Calu3 (cell line): ENCODE measurements at regions of chrX and their contacts with region 1.

Region 1: DNA sequence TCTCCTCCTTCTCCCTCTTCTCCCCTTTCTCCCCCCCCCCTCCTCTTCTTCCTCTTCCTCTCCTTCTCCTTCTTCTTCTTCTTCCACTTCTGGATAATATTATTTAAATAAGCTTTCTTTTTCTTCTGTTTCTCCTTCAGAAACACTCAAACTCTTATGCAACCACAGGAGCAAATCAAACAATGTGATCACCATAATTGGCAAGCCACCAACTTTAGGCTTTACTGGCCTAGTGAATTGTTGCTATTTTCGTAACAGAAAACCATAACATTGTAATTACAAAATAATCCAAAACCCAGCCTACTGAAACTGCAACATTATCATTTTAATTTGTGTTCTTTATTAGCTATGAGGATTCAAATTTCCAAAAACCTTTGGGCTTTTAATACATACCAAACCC is 14.3 kb downstream of the DCAF8L1 start:
- DNase-seq: peak; percentile 24
- H3K4me3 Mint-ChIP-seq: no peak overlapping the region
- H3K27ac Mint-ChIP-seq: peak overlapping the region; percentile 99
- H3K4me1 Mint-ChIP-seq: peaks cover 37% of the 10 kb centered on the region
- H3K27me3 Mint-ChIP-seq: no peaks in the 10 kb centered on the region
- CTCF ChIP-seq: no peak

Region 2: DNA sequence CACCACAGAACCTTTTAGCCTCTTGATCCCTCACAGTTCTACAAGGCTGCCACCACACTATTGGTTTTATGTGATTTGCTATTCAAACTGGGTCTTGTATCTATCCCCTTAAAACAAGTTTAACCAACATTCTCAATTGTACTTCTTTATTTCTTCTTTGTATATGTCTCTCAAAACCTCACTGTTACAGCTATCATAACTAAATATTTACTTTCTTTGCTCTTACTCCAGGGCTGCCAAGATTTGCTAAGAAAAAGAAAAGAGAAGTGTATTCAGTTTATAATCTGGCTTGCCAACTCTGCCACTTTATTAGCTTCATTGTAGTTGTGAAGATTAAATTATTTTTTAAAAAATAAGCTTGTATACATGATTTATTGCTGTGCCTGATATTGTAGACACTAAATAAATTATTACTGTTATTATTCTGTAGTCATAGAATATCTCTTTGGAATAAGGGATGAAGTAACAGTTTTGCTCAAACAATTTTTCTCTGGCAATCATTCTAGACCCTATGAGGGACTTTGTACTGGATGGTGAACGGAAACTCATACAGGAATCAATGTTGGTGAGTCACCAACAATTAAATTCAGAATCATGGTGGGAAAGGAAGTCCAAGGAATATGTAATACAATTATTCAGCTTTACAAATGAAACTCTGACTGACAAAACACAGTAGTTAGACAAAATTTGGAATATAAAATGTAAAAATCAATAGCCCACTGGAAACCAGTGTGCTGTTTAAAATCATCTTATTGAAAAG is 141.4 kb after region 1 on chrX:
- CTCF ChIA-PET with region 1: no interaction called
- intact Hi-C with region 1: loop called (anchors 5 kb)
- DNase-seq: no peak
- H3K4me3 Mint-ChIP-seq: no peak overlapping the region
- H3K27ac Mint-ChIP-seq: peak overlapping the region; percentile 78
- H3K4me1 Mint-ChIP-seq: peaks cover 11% of the 10 kb centered on the region
- H3K27me3 Mint-ChIP-seq: no peaks in the 10 kb centered on the region
- CTCF ChIP-seq: no peak

Region 3: GRCh38 chrX:28205905-28206304 is 238.9 kb after region 1 on chrX:
- CTCF ChIA-PET with region 1: no interaction called
- intact Hi-C with region 1: loop called (anchors 10 kb)
- DNase-seq: peak; percentile 6
- H3K4me3 Mint-ChIP-seq: peak overlapping the region; percentile 44
- H3K27ac Mint-ChIP-seq: peak overlapping the region; percentile 44
- H3K4me1 Mint-ChIP-seq: peaks cover 14% of the 10 kb centered on the region
- H3K27me3 Mint-ChIP-seq: no peaks in the 10 kb centered on the region
- CTCF ChIP-seq: no peak

Region 4: GRCh38 chrX:28408017-28408723 is 441.2 kb after region 1 on chrX:
- CTCF ChIA-PET with region 1: no interaction called
- intact Hi-C with region 1: loop called (anchors 10 kb)
- DNase-seq: no peak
- H3K4me3 Mint-ChIP-seq: no peak overlapping the region
- H3K27ac Mint-ChIP-seq: no peak overlapping the region
- H3K4me1 Mint-ChIP-seq: peaks cover 26% of the 10 kb centered on the region
- H3K27me3 Mint-ChIP-seq: no peaks in the 10 kb centered on the region
- CTCF ChIP-seq: no peak